Vagina (tissue), 2 donors: ENCODE measurements at regions of chr7 and their contacts with region 1.

Region 1: GRCh38 chr7:98553616-98554015 is 63.5 kb upstream of the NPTX2 start:
- DNase-seq: no peak
- H3K4me3 ChIP-seq: no peak overlapping the region
- H3K27ac ChIP-seq: no peak overlapping the region
- H3K4me1 ChIP-seq: no peaks in the 10 kb centered on the region
- H3K27me3 ChIP-seq: no peaks in the 10 kb centered on the region
- CTCF ChIP-seq: no peak
- POLR2A ChIP-seq: no peak

Region 2: GRCh38 chr7:98598846-98599615 is 45.4 kb after region 1 on chr7:
- intact Hi-C with region 1: loop called (anchors 1 kb)
- DNase-seq: no peak
- H3K4me3 ChIP-seq: no peak overlapping the region
- H3K27ac ChIP-seq: no peak overlapping the region
- H3K4me1 ChIP-seq: no peaks in the 10 kb centered on the region
- H3K27me3 ChIP-seq: no peaks in the 10 kb centered on the region
- CTCF ChIP-seq: no peak
- POLR2A ChIP-seq: no peak